Right cardiac atrium (tissue), 5 donors: ENCODE measurements at regions of chr1 and their contacts with region 1.

Region 1: DNA sequence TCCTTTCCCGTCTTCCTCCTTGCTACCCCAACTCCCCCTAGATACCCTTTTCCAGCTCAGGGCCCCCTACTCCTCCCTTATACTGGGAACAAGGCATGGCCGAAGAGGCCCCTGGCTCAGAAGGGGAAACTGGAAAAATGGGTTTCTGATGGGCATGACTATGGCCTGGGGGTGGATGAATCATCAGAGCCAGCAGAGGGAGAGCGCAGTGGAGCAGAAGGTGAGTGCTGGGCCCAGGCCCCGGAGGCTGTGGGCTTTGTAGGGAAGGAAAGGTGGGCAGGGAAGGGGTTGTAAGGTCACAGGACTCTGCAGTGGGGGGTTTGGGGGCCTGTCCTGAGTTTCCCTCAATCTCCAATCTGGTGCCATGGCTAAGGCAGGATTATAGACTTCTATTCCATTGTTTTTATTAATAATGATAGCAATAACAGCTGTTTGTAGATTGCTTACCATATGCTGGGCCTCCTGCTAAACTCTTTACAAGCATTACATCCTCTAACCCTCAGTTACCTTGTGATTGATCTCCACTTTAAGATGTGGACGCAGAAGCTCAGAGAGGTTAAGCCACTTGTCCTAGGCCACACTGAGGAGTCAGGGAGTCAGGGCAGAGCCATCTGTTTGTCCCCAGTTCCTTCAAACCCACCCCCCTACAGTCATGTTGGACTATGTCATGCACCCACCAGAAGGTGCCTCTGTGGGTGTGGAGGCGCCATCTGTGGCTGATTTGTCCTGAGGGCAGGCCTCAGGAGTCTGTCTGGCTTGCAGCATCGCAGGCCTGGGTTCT is 36.2 kb upstream of the ZNF362 start:
- DNase-seq: peak in 1 of 3 donors; percentile 30
- ATAC-seq: peak in 1 of 2 donors; percentile 27
- H3K4me3 ChIP-seq: no peak overlapping the region
- H3K27ac ChIP-seq: no peak overlapping the region
- H3K4me1 ChIP-seq: no peaks in the 10 kb centered on the region
- H3K27me3 ChIP-seq: no peaks in the 10 kb centered on the region

Region 2: GRCh38 chr1:32925403-32926162 is 294.5 kb before region 1 on chr1:
- intact Hi-C with region 1: no loop called
- DNase-seq: peak; percentile 32 to 68 (median 61)
- ATAC-seq: peak; percentile 61 to 79
- H3K4me3 ChIP-seq: peak overlapping the region; percentile 19
- H3K27ac ChIP-seq: no peak overlapping the region
- H3K4me1 ChIP-seq: no peaks in the 10 kb centered on the region
- H3K27me3 ChIP-seq: no peaks in the 10 kb centered on the region

Region 3: GRCh38 chr1:33286451-33287185 is 66.5 kb after region 1 on chr1:
- intact Hi-C with region 1: no loop called
- DNase-seq: no peak
- ATAC-seq: no peak
- H3K4me3 ChIP-seq: no peak overlapping the region
- H3K27ac ChIP-seq: peak overlapping the region; percentile 16
- H3K4me1 ChIP-seq: peaks cover 4% of the 10 kb centered on the region
- H3K27me3 ChIP-seq: no peaks in the 10 kb centered on the region

Region 4: DNA sequence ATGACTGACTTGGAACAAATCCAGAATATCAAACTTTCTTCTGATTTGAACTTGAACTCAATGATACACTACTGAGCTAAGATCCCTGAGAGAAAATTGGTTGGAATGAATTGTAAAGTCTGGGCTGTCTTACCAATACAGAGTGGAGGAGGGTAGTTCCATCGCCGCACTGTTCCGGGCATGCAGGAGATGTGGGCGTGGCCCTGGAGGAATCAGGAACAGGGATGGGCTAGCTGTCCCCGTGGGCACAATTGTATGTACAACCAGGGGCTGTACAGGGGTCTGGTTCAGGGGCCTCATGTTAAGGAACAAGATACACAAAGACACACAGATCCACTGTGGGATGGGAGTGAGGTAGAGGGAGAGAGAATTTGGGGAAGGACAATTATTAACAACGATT is 396.7 kb after region 1 on chr1:
- intact Hi-C with region 1: loop called in 1 of 4 experiments (anchors 10 kb)
- DNase-seq: no peak
- ATAC-seq: peak in 1 of 2 donors; percentile 33
- H3K4me3 ChIP-seq: no peak overlapping the region
- H3K27ac ChIP-seq: no peak overlapping the region
- H3K4me1 ChIP-seq: no peaks in the 10 kb centered on the region
- H3K27me3 ChIP-seq: no peaks in the 10 kb centered on the region